Transverse colon (tissue), 4 donors: ENCODE measurements at regions of chr1 and their contacts with region 1.

Region 1: DNA sequence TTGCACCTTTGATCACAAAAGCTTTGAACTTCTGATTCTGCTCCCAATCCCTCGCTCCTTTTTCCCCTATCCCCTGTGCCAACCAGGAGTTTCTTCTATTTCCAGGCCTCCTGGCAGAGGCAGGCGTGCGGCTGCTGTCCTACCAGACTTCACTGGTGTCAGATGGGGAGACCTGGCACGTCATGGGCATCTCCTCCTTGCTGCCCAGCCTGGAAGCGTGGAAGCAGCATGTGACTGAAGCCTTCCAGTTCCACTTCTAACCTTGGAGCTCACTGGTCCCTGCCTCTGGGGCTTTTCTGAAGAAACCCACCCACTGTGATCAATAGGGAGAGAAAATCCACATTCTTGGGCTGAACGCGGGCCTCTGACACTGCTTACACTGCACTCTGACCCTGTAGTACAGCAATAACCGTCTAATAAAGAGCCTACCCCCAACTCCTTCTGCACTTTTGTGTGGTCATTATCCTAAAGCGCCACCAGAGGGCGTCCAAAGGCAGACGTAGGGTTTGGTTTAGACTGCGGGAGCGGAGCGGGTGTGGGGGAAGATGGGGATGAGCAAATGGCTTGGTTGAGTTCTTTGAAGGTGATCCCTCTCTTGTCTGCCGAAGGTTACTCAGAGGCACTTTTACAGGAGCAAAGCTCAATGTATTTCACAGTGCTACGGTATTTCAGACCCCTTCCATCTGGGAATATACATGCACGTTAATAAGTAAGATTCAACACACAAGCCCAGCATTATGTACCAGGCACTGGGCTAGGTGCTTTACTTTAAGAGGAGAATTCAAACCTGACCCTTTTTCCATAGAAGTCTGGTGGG is 24.7 kb downstream of the HMGCS2 start:
- DNase-seq: peak; percentile 73
- H3K4me3 ChIP-seq: no peak overlapping the region
- H3K27ac ChIP-seq: no peak overlapping the region
- H3K4me1 ChIP-seq: peaks cover 0 to 9% (median 6%) of the 10 kb centered on the region in 4 donors
- H3K27me3 ChIP-seq: no peaks in the 10 kb centered on the region
- CTCF ChIP-seq: peak; percentile 68 to 83 (median 82)
- EP300 ChIP-seq: no peak
- POLR2A ChIP-seq: no peak

Region 2: DNA sequence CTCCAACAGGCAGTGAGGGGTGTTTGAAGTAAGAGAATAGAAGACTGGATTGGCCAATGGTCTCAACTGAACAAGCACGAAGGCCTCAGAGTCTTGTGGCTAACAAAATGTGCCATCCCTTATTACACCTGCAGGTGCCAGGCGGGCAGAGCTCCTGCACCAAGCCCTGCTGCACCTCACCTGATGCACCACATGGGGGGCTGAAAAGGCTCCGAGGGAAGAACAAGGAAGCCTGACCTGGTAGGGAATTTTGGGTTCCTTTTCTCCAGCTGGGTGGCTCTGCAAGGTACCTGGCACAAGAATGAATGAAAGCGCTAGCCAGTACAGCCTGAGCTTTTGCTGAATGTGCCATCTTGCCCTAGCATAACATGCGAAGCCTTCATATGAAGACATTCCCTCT is 227.3 kb before region 1 on chr1:
- in situ Hi-C with region 1: no loop called
- intact Hi-C with region 1: no loop called
- DNase-seq: no peak
- H3K4me3 ChIP-seq: no peak overlapping the region
- H3K27ac ChIP-seq: no peak overlapping the region
- H3K4me1 ChIP-seq: no peaks in the 10 kb centered on the region
- H3K27me3 ChIP-seq: no peaks in the 10 kb centered on the region
- CTCF ChIP-seq: no peak
- EP300 ChIP-seq: no peak
- POLR2A ChIP-seq: no peak

Region 3: DNA sequence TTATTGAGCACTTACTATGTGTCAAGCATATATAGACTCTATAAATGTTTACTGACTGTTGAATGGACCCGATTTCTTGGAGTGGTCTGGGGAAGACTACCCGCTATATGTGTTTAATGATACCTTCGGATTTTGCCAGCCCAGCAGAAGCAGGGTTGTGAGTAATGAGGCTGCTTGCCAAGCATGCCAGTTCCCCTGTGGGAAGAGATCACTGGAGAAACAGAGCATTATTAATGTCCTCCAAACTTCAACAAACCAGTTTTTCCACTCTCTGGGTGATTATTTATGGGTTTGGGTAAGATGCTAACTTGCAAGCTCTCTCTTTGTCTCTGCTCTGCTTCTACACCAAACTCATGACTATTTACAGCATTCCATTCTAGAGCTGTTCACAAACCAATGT is 57.3 kb before region 1 on chr1:
- in situ Hi-C with region 1: no loop called
- intact Hi-C with region 1: no loop called
- DNase-seq: no peak
- H3K4me3 ChIP-seq: no peak overlapping the region
- H3K27ac ChIP-seq: no peak overlapping the region
- H3K4me1 ChIP-seq: no peaks in the 10 kb centered on the region
- H3K27me3 ChIP-seq: no peaks in the 10 kb centered on the region
- CTCF ChIP-seq: no peak
- EP300 ChIP-seq: no peak
- POLR2A ChIP-seq: no peak

Region 4: GRCh38 chr1:119795261-119796200 is 51.5 kb after region 1 on chr1:
- in situ Hi-C with region 1: no loop called
- intact Hi-C with region 1: no loop called
- DNase-seq: no peak
- H3K4me3 ChIP-seq: no peak overlapping the region
- H3K27ac ChIP-seq: peak overlapping the region in 3 of 4 donors; percentile 1 to 46 (median 14)
- H3K4me1 ChIP-seq: peaks cover 10 to 28% (median 19%) of the 10 kb centered on the region in 4 donors
- H3K27me3 ChIP-seq: no peaks in the 10 kb centered on the region
- CTCF ChIP-seq: no peak
- EP300 ChIP-seq: no peak
- POLR2A ChIP-seq: no peak

Region 5: GRCh38 chr1:119870917-119871596 is 127.1 kb after region 1 on chr1:
- in situ Hi-C with region 1: loop called in 1 of 4 experiments (anchors 25 kb)
- intact Hi-C with region 1: no loop called
- DNase-seq: peak; percentile 76
- H3K4me3 ChIP-seq: no peak overlapping the region
- H3K27ac ChIP-seq: no peak overlapping the region
- H3K4me1 ChIP-seq: peaks cover 0 to 10% (median 0%) of the 10 kb centered on the region in 4 donors
- H3K27me3 ChIP-seq: no peaks in the 10 kb centered on the region
- CTCF ChIP-seq: peak; percentile 68 to 87 (median 83)
- EP300 ChIP-seq: no peak
- POLR2A ChIP-seq: no peak